Ascending aorta (tissue), 2 donors: ENCODE measurements at regions of chr20 and their contacts with region 1.

Region 1: DNA sequence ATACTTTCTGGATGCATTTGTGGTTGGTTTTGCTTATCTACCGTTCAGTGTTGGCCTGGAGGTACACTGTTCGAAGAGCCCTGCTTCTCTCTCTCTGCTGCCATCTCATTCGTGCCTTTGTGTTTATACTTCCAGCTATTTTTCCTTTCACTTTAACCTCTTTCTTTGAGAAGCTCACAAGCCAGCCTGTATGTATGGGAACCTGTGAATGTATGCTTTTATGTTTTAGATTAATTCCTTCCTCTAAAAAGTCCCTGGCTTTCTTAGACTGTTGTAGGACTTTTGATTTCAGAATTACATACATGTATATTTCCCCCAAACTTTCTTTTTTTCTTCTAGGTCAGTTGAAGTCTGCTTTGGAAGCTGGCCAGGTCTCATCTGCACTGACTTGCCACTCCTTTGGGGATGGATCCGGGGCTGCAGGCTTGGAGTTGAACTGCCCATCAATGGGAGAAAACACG is 83.0 kb downstream of the SCAND1 start:
- DNase-seq: no peak
- H3K4me3 ChIP-seq: peak overlapping the region; percentile 18 to 40
- H3K27ac ChIP-seq: peak overlapping the region; percentile 45 to 77
- H3K4me1 ChIP-seq: peaks cover 0 to 9% of the 10 kb centered on the region in 2 donors
- H3K27me3 ChIP-seq: no peaks in the 10 kb centered on the region
- CTCF ChIP-seq: no peak

Region 2: GRCh38 chr20:35831029-35831428 is 40.3 kb before region 1 on chr20:
- intact Hi-C with region 1: loop called (anchors 5 kb)
- DNase-seq: no peak
- H3K4me3 ChIP-seq: no peak overlapping the region
- H3K27ac ChIP-seq: no peak overlapping the region
- H3K4me1 ChIP-seq: no peaks in the 10 kb centered on the region
- H3K27me3 ChIP-seq: no peaks in the 10 kb centered on the region
- CTCF ChIP-seq: no peak

Region 3: GRCh38 chr20:35907017-35907701 is 35.8 kb after region 1 on chr20:
- intact Hi-C with region 1: no loop called
- DNase-seq: no peak
- H3K4me3 ChIP-seq: no peak overlapping the region
- H3K27ac ChIP-seq: no peak overlapping the region
- H3K4me1 ChIP-seq: no peaks in the 10 kb centered on the region
- H3K27me3 ChIP-seq: no peaks in the 10 kb centered on the region
- CTCF ChIP-seq: no peak